A673 (cell line): ENCODE measurements at regions of chr5 and their contacts with region 1.

Region 1: DNA sequence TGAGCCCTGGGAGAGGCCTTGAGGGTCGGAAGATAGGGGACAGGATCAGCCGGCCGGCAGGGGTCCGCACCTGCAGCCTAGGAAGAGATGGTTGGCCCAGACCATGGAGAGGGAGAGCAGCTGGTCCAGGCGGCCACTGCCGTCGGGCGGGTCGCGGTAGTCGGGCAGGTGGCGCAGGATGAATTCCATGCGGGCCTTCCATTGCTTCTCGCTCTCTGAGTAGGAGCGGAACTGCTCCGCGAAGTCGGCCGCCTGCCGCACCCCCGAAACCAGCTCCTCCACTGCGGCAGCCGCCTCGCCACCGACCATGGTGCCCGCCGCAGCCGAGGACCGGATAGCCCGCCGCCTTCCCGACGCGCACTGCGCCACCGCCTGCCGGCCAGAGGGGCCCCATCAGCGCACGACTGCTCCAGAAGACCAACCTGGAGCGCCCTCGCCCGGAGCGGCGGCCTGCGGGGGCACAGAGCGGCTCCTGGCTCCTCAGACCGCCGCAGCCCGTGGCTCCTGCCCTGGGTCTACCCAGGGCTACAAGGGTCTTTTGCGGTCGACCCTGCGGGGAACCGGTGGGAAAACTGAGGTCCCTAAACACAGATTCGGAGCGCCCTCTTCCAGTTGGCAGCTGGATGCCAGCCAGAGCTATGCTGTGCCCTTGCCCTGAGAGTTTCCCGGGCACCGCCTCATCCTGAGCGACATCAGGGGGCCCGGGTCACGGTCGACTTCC is at the start of gene CDKN2AIPNL:
- DNase-seq: peak; percentile 92
- H3K4me3 ChIP-seq: peak within 1 kb of the TSS; percentile 76
- H3K27ac ChIP-seq: peak within 1 kb of the TSS; percentile 76
- H3K4me1 ChIP-seq: peaks cover 7% of the 10 kb centered on the region
- H3K27me3 ChIP-seq: no peaks in the 10 kb centered on the region
- CTCF ChIP-seq: peak; percentile 89
- total RNA-seq, gene CDKN2AIPNL: 59.2 and 60.5 TPM in 2 replicates

Region 2: DNA sequence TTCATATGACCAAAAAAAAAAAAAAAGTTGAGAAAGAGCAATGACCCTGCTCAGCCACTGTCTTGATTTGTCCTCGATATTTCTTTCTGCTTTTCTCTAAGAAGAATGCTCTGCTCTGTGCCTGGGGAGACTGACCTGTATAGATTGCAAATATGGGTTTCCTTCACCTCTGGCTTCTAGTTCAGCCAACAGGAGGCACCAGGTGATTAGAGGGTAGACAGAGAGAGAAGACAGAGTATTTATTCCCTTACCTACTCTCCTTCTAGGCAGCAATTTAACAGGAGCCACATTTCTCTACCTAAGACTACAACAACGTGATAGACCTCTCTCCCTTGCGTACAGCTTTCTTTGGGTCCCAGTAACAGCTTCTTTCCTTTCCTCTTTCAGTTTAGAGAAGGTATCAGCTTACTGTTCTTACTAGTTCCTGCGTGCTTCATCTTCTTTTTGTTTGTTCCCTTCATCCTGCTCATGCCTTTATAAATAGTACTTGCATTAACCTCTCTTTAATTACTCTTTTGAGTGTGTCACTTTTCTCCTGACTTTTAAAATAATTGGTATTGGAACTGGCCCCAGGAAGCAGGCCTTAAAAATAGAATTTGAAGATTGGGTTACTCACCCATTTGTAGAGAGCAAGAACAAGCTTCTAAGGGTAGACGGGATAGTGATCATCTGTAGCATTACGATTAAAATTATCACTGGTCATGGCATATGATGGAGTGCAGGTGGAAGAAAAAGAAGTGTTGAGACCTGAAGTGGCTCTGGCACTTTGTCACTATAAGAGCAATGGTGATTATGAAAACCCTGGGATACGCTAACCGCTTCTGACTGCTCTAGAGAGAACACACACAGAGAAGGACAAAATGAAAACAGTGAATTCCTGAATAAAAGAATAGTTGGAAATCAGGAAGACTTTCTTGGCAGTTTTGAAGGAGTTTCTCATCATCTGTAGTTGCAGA is 638.2 kb before region 1 on chr5:
- CTCF ChIA-PET with region 1: no interaction called
- POLR2A ChIA-PET with region 1: no interaction called
- intact Hi-C with region 1: no loop called
- DNase-seq: no peak
- H3K4me3 ChIP-seq: no peak overlapping the region
- H3K27ac ChIP-seq: no peak overlapping the region
- H3K4me1 ChIP-seq: no peaks in the 10 kb centered on the region
- H3K27me3 ChIP-seq: peaks cover 4% of the 10 kb centered on the region
- CTCF ChIP-seq: no peak

Region 3: DNA sequence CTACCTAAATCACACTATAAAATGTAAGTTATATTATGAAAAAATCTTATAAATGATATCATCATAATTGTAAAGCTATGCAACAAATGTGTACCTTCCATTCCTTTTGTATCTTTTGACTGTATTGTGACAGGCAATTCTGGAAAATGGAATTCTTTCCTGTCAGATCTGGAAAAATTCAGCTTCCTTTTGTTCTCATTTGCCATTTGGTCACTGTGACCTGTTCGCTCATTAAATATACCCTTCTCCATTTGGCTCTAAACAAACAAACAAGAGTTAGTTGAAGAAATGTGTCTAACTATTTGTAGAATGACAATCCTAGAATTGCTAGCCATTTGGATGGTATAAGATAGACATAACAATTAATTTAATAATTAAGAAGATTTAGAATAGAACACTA is 107.4 kb before region 1 on chr5:
- CTCF ChIA-PET with region 1: no interaction called
- POLR2A ChIA-PET with region 1: no interaction called
- intact Hi-C with region 1: loop called (anchors 5 kb)
- DNase-seq: no peak
- H3K4me3 ChIP-seq: no peak overlapping the region
- H3K27ac ChIP-seq: no peak overlapping the region
- H3K4me1 ChIP-seq: no peaks in the 10 kb centered on the region
- H3K27me3 ChIP-seq: no peaks in the 10 kb centered on the region
- CTCF ChIP-seq: no peak

Region 4: DNA sequence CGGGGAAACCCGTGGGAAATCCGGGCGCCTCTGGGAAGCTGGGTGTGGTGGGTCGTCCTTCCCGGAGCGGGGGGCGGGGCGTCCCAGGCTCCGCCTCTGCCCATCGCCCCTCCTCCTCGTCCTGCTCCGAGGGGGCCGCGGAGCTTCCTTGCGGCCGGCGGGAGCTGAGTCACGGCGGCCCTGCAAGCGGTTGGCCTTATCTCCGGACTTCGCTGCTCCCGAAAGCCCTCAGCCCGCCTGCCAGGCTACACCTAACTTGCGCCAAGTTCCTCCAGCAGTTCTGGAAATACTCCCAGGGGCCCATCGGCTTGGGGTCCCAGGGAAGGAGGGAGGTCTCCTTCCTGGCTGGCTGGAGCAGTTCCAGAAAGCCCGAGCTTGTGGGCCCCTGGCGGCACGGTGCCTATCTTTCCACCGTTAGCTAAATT is 54.1 kb after region 1 on chr5:
- CTCF ChIA-PET with region 1: no interaction called
- POLR2A ChIA-PET with region 1: no interaction called
- intact Hi-C with region 1: loop called (anchors 5 kb)
- DNase-seq: peak; percentile 87
- H3K4me3 ChIP-seq: peak overlapping the region; percentile 54
- H3K27ac ChIP-seq: peak overlapping the region; percentile 91
- H3K4me1 ChIP-seq: peaks cover 16% of the 10 kb centered on the region
- H3K27me3 ChIP-seq: no peaks in the 10 kb centered on the region
- CTCF ChIP-seq: no peak

Region 5: GRCh38 chr5:134527146-134527960 is 115.6 kb after region 1 on chr5:
- CTCF ChIA-PET with region 1: no interaction called
- POLR2A ChIA-PET with region 1: no interaction called
- intact Hi-C with region 1: loop called (anchors 5 kb)
- DNase-seq: peak; percentile 92
- H3K4me3 ChIP-seq: peak overlapping the region; percentile 84
- H3K27ac ChIP-seq: peak overlapping the region; percentile 68
- H3K4me1 ChIP-seq: peaks cover 13% of the 10 kb centered on the region
- H3K27me3 ChIP-seq: no peaks in the 10 kb centered on the region
- CTCF ChIP-seq: peak; percentile 78

Region 6: DNA sequence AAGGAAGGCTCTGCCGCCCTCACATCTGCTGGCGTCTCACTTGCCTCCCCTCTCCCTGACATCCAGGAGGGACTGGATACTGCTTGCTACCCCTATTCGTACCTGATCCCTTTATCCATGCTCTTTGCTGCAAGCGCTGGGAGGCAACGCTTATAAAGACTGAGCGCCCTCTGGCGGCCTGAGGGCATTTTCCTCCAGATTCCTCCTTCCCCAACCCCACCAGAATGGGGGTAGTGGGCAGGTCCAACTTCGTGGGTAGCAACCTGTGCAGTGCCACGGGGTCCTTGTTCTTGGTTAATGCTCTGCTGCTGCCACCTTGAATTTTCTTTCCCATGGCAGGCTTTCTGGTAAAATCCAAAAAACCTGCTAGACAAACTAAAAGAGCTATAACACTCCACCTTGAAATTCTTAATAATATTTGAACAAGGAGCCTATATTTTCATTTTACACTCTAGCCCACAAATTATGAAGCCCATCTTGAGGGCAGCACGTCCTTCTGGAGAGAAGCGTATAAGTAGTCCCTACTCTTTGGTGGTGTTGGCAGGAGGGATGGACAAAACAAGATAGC is 166.2 kb after region 1 on chr5:
- CTCF ChIA-PET with region 1: no interaction called
- POLR2A ChIA-PET with region 1: no interaction called
- intact Hi-C with region 1: loop called (anchors 5 kb)
- DNase-seq: peak; percentile 86
- H3K4me3 ChIP-seq: no peak overlapping the region
- H3K27ac ChIP-seq: no peak overlapping the region
- H3K4me1 ChIP-seq: no peaks in the 10 kb centered on the region
- H3K27me3 ChIP-seq: no peaks in the 10 kb centered on the region
- CTCF ChIP-seq: peak; percentile 91